ENCODE measurements at regions of chr3 and their contacts with region 1.

Region 1: GRCh38 chr3:27423463-27423862 is 54.3 kb upstream of the NEK10 start:
- DNase-seq: no peak
- ATAC-seq: no peak
- H3K4me3 ChIP-seq: no peak overlapping the region
- H3K4me3 Mint-ChIP-seq: no peak overlapping the region
- H3K27ac ChIP-seq: no peak overlapping the region
- H3K27ac Mint-ChIP-seq: no peak overlapping the region
- H3K4me1 ChIP-seq: no peaks in the 10 kb centered on the region
- H3K4me1 Mint-ChIP-seq: peaks cover 0 to 6% (median 0%) of the 10 kb centered on the region in 7 donors
- H3K27me3 ChIP-seq: no peaks in the 10 kb centered on the region
- H3K27me3 Mint-ChIP-seq: no peaks in the 10 kb centered on the region

Region 2: GRCh38 chr3:27376109-27376772 is 47.2 kb before region 1 on chr3:
- CTCF ChIA-PET with region 1: no interaction called
- POLR2A ChIA-PET with region 1: no interaction called
- intact Hi-C with region 1: no loop called
- DNase-seq: no peak
- ATAC-seq: no peak
- H3K4me3 ChIP-seq: no peak overlapping the region
- H3K4me3 Mint-ChIP-seq: no peak overlapping the region
- H3K27ac ChIP-seq: no peak overlapping the region
- H3K27ac Mint-ChIP-seq: no peak overlapping the region
- H3K4me1 ChIP-seq: no peaks in the 10 kb centered on the region
- H3K4me1 Mint-ChIP-seq: peaks cover 0 to 8% (median 0%) of the 10 kb centered on the region in 7 donors
- H3K27me3 ChIP-seq: no peaks in the 10 kb centered on the region
- H3K27me3 Mint-ChIP-seq: no peaks in the 10 kb centered on the region

Region 3: GRCh38 chr3:27387625-27388024 is 35.8 kb before region 1 on chr3:
- CTCF ChIA-PET with region 1: no interaction called
- POLR2A ChIA-PET with region 1: no interaction called
- intact Hi-C with region 1: loop called in 1 of 2 experiments (anchors 5 kb)
- DNase-seq: no peak
- ATAC-seq: no peak
- H3K4me3 ChIP-seq: no peak overlapping the region
- H3K4me3 Mint-ChIP-seq: no peak overlapping the region
- H3K27ac ChIP-seq: no peak overlapping the region
- H3K27ac Mint-ChIP-seq: peak overlapping the region in 2 of 9 donors; percentile 54 to 60
- H3K4me1 ChIP-seq: no peaks in the 10 kb centered on the region
- H3K4me1 Mint-ChIP-seq: peaks cover 0 to under 1% (median 0%) of the 10 kb centered on the region in 7 donors
- H3K27me3 ChIP-seq: no peaks in the 10 kb centered on the region
- H3K27me3 Mint-ChIP-seq: no peaks in the 10 kb centered on the region

Region 4: DNA sequence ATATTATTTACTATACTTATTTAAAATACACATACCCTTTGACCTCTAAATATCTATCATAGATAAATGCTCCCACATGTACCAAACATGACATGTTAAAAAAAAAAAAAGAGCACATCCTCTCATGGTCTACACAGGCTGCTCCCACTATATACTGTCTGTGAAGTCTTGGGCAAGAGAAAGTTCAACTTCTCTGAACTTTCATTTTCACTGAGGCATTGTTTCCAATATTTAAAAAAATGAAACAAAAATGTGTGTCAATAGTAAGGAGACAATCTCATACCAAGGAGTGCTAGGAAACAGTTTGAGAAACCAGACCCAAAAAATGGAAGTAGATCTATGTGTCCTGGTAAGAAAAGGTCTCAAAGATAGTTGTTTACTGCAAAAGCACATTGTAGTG is 31.5 kb after region 1 on chr3:
- CTCF ChIA-PET with region 1: no interaction called
- POLR2A ChIA-PET with region 1: no interaction called
- intact Hi-C with region 1: loop called (anchors 5 kb)
- DNase-seq: peak in 1 of 9 donors; percentile 11
- ATAC-seq: no peak
- H3K4me3 ChIP-seq: no peak overlapping the region
- H3K4me3 Mint-ChIP-seq: peak overlapping the region in 3 of 10 donors; percentile 12 to 37 (median 20)
- H3K27ac ChIP-seq: no peak overlapping the region
- H3K27ac Mint-ChIP-seq: peak overlapping the region in 2 of 9 donors; percentile 26 to 41
- H3K4me1 ChIP-seq: peaks cover 7 to 13% of the 10 kb centered on the region in 2 donors
- H3K4me1 Mint-ChIP-seq: peaks cover 24 to 72% (median 63%) of the 10 kb centered on the region in 7 donors
- H3K27me3 ChIP-seq: no peaks in the 10 kb centered on the region
- H3K27me3 Mint-ChIP-seq: no peaks in the 10 kb centered on the region

Region 5: DNA sequence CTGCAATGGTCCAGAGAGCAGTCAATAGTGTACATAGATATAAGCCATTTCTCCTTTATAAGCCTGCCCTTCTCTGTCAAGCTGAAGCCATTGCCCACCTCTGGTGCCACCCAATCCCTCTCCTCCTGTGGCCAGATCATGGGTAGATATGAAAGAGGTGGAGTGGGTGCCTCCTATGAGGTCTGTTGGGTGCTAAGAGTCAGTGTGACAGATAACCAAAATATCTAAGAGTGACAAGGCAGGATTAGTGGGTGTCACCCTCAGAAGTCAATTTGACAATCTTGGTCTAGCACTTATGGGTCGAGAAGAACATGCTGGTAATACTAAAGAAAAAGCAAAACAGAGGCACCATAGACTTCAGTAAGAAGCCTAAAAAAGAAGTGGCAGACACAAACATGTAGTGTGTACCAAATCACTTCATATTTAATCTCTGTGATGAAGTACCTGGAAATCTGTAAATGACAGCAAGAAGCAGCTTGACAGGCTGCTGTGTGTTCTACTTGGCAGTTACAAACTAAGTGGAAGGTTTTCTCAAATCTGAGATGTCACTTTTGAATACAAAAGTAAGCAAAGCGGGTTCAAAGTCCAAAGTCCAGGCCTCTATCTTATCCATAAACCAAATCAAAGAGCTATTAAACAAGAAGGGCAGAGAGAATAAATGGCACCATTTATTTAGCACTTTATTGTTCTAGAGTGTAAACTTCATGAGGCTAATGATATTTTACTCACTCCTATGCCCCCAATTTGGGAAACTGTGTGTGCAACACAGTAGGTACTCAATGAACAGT is 417.5 kb after region 1 on chr3:
- CTCF ChIA-PET with region 1: no interaction called
- POLR2A ChIA-PET with region 1: no interaction called
- intact Hi-C with region 1: no loop called
- DNase-seq: no peak
- ATAC-seq: peak; percentile 70
- H3K4me3 ChIP-seq: no peak overlapping the region
- H3K4me3 Mint-ChIP-seq: no peak overlapping the region
- H3K27ac ChIP-seq: no peak overlapping the region
- H3K27ac Mint-ChIP-seq: no peak overlapping the region
- H3K4me1 ChIP-seq: peaks cover 0 to 18% of the 10 kb centered on the region in 2 donors
- H3K4me1 Mint-ChIP-seq: peaks cover 4 to 32% (median 19%) of the 10 kb centered on the region in 7 donors
- H3K27me3 ChIP-seq: no peaks in the 10 kb centered on the region
- H3K27me3 Mint-ChIP-seq: no peaks in the 10 kb centered on the region